Activated naive CD8-positive, alpha-beta T cell treated with anti-CD3 and anti-CD28 coated beads, Interleukin-2, amount 10 ng/mL, durations not matched to agents 7 days and 5 days (primary cell): ENCODE measurements at regions of chr3 and their contacts with region 1.

Region 1: DNA sequence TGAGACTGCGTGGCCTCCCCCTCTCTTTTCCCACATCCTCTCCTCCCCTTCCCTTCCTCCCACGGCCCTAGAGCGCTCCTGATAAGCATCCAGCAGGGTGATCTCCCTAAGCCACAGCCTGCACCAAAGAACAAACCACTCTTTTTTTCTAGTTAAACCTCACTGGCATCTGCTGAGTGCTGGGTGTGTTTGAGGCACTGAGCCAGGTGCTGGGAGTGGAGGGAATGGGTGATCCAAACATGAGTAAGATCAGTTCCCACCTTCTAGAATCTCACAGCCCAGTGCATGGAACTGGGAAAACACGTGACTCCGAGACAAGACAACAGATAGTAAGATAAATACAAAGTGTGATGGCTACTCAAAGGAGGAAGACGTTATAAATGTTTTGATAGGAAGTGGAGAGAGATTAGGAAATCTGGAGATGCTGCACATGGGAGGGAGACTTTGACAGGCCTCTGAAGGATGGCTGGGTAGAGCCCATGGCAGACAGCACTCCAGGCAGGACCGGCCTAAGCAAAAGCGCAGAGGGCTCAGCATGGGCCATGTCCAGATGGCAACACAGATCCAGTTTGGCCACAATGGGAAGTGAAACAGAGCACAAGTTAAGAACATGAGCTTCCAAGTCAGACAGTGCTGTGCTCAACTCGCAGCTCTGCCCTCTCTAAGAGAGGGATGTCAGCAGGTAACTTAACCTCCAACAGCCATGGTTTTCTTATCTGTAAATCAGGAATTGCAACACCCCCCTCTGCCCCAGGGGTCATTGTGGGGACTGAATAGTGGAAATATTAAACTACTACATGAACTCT is 55.6 kb downstream of the CCR3 start:
- DNase-seq: no peak
- ATAC-seq: no peak
- H3K4me3 Mint-ChIP-seq: peak overlapping the region; percentile 23
- H3K27ac Mint-ChIP-seq: peak overlapping the region; percentile 96
- H3K4me1 Mint-ChIP-seq: peaks cover 83% of the 10 kb centered on the region
- H3K27me3 Mint-ChIP-seq: no peaks in the 10 kb centered on the region

Region 2: GRCh38 chr3:46098319-46098761 is 199.5 kb before region 1 on chr3:
- POLR2A ChIA-PET with region 1: no interaction called
- DNase-seq: peak; percentile 65
- ATAC-seq: peak; percentile 66
- H3K4me3 Mint-ChIP-seq: peak overlapping the region; percentile 75
- H3K27ac Mint-ChIP-seq: peak overlapping the region; percentile 99
- H3K4me1 Mint-ChIP-seq: peaks cover 69% of the 10 kb centered on the region
- H3K27me3 Mint-ChIP-seq: no peaks in the 10 kb centered on the region

Region 3: DNA sequence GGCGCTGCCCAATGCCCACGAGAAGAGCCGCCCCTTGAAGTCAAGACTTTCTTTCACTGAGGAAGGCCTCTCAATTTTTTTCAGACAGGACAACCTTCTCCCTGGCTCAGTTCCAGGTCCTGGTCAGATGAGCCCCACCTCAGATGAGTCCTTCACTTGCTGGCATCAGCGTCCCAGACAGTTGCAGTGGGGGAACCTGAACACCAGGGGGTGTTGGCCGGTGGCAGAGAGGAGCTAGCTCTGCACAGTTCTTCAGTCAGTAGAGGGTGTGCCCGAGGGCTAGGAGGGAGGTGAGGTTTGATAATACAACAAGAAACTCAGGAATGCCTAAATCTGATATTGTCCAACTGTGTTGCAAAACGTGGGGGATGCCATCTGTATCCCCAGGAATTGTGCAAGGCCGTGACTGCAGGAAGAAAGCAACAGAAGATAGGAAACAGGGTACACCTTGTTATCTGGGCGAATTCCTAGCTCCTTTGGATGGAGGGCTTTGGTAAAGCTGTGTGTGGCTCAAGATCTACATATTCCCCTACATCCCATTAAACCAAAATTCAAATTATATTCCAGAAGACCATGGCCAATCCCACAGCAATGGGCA is 21.3 kb before region 1 on chr3:
- POLR2A ChIA-PET with region 1: interaction called, 22 read pairs
- DNase-seq: peak; percentile 81
- ATAC-seq: peak; percentile 75
- H3K4me3 Mint-ChIP-seq: peak overlapping the region; percentile 3
- H3K27ac Mint-ChIP-seq: peak overlapping the region; percentile 87
- H3K4me1 Mint-ChIP-seq: peaks cover 56% of the 10 kb centered on the region
- H3K27me3 Mint-ChIP-seq: peaks cover 10% of the 10 kb centered on the region

Region 4: DNA sequence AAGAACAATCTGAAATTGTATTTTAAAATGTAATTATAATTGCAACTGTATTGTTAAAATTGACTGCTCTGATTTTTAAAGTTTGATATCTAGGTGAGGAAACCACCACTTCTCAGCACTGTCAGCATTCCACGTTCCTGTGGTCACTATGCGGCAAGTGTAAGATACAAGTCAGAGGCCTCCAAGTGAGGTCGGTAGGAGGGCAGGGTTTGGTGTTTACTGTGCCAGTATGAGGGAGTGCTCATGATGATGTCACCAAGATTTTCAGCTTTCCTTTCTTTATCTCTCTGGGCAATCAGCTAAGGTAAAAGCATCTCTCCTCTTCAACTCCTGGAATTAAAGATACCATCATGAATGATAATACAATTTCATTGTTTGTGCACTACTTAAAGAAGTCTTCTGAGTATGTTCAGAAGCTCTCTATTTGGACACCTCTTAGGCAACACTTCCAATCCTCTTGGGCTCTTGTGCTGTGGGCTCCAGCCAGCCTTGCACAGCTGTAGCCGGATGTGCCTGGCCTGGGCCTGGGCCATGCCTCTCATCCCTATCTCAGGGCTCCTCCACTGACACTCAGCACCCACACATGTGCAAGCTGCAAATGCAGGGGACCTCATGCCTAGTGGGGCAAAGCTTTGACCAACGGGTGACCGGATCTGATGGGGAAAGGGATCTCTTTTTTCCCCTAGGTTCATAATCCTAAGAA is 12.7 kb before region 1 on chr3:
- POLR2A ChIA-PET with region 1: interaction called, 27 read pairs
- DNase-seq: no peak
- ATAC-seq: peak; percentile 37
- H3K4me3 Mint-ChIP-seq: peak overlapping the region; percentile 65
- H3K27ac Mint-ChIP-seq: peak overlapping the region; percentile 80
- H3K4me1 Mint-ChIP-seq: peaks cover 66% of the 10 kb centered on the region
- H3K27me3 Mint-ChIP-seq: no peaks in the 10 kb centered on the region

Region 5: DNA sequence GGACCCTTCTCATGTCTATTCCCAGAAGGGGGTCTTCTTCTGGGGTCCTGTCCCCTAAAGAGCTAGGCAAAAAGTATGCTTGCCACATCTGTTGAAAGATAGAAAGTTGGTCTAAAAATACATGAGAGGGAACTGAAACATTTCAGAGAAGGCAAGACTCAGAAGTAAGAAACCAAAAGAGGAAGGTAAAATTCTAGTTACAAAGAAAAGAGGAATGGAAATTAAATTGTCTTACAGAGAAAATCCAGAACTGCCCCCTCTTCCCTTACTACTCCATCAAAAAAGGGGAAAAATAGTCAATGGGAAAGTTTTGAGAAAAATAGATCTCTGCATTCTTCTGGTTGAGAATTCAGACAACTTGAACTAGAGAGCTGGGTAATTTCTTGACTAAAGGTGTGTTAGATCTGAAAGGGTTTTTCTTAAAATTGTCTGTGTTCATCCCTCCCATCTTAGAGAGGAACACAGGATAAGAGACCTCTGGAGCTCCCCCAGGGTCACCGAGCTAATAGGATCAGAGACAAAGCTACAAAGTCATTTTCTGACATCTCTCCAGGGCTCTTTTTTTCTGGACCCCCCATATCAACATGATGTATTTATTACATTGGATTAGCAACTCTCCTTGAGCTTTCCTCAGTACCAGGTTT is 23.7 kb after region 1 on chr3:
- POLR2A ChIA-PET with region 1: no interaction called
- DNase-seq: no peak
- ATAC-seq: no peak
- H3K4me3 Mint-ChIP-seq: no peak overlapping the region
- H3K27ac Mint-ChIP-seq: no peak overlapping the region
- H3K4me1 Mint-ChIP-seq: peaks cover 5% of the 10 kb centered on the region
- H3K27me3 Mint-ChIP-seq: peaks cover 9% of the 10 kb centered on the region

Region 6: DNA sequence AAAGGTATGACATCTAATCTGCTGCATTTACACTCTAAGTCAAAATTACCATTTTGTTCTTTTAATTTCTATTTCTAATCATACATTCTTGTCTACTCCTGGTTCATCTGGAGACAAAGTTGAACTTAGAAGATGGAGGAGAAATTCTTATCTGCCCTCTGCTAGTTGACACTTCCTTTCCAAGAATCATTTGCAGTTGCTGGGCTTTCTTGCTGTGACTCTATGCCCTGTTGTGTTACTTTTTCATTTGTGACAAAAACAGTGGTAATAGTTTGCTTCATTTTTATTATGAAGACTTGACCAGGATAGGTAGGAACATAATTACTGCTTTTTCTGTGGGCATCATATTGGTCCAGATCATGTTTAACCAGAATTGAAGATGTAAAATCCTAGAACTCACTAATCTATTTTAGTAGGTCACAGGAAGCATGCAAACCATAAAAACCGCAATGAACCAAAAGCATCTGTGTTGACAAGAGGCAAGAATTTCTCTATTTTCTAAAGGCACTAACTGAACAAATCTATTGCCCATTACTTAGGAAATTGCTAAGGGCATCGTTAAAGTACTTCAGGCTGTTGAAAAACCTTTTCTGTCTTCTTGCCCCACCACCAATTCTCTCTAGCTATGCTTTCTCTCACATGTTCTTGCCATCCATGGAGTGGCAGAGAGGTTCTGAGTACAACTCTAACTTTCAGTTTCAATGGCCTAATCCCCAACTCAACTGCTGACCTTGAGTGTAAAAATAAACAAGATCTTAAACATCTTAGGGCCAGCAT is 51.8 kb after region 1 on chr3:
- POLR2A ChIA-PET with region 1: interaction called, 21 read pairs
- DNase-seq: no peak
- ATAC-seq: peak; percentile 46
- H3K4me3 Mint-ChIP-seq: peak overlapping the region; percentile 74
- H3K27ac Mint-ChIP-seq: peak overlapping the region; percentile 92
- H3K4me1 Mint-ChIP-seq: peaks cover 59% of the 10 kb centered on the region
- H3K27me3 Mint-ChIP-seq: no peaks in the 10 kb centered on the region

Region 7: DNA sequence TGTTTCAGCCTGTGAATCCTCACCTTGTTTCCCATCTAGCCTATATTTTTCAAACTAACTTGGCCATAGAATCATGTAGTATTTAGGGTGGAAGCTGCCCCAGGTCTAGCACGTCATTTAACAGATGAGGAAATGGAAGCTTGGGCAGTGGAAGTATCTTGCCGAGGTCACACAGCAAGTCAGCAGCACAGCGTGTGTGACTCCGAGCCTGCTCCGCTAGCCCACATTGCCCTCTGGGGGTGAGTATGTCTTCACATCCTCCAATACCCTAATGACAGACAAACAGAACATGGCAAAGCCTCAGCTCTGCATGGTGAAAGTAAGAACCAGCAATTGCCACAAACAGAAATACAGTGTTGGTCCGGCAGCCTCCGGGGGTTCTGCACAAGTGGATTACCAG is 70.7 kb after region 1 on chr3:
- POLR2A ChIA-PET with region 1: interaction called, 18 read pairs
- DNase-seq: peak; percentile 51
- ATAC-seq: peak; percentile 59
- H3K4me3 Mint-ChIP-seq: no peak overlapping the region
- H3K27ac Mint-ChIP-seq: peak overlapping the region; percentile 71
- H3K4me1 Mint-ChIP-seq: peaks cover 65% of the 10 kb centered on the region
- H3K27me3 Mint-ChIP-seq: no peaks in the 10 kb centered on the region